ENCODE measurements at regions of chr22 and their contacts with region 1.

Region 1: GRCh38 chr22:41951898-41952474 is at the start of gene SMIM45:
- DNase-seq: no peak
- H3K4me3 ChIP-seq: no peak within 1 kb of the TSS
- H3K27ac ChIP-seq: no peak within 1 kb of the TSS
- H3K4me1 ChIP-seq: peaks cover 0 to 3% of the 10 kb centered on the region in 2 donors
- H3K27me3 ChIP-seq: no peaks in the 10 kb centered on the region
- CTCF ChIP-seq: no peak
- POLR2A ChIP-seq: no peak

Region 2: DNA sequence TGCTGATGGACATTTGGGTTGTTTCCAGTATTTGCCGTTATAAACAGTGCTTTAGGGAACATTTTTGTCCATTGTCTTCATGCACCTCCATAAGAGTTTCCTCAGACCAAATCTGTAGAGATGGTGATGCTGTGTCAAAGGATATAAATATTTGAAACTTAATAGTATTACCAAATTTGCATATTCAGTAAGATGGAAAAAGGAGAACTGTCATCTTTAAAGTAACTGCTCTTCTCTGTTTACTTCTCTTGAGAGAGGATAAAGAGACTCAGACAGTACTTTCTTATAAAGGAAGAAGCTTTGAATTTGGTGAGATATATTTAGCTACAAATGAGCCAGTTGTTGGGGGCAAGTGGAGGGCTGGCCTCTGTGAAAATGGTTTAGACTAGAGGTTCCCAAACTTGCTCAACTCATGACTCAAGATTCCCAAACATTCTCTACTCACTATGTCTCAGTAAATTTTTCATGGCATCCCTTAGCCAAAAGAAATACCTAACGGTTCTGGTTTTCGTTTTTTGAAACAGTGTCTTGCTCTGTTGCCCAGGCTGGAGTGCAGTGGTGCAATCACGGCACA is 63.3 kb before region 1 on chr22:
- intact Hi-C with region 1: no loop called
- DNase-seq: no peak
- H3K4me3 ChIP-seq: no peak overlapping the region
- H3K27ac ChIP-seq: no peak overlapping the region
- H3K4me1 ChIP-seq: no peaks in the 10 kb centered on the region
- H3K27me3 ChIP-seq: no peaks in the 10 kb centered on the region
- CTCF ChIP-seq: no peak
- POLR2A ChIP-seq: no peak

Region 3: DNA sequence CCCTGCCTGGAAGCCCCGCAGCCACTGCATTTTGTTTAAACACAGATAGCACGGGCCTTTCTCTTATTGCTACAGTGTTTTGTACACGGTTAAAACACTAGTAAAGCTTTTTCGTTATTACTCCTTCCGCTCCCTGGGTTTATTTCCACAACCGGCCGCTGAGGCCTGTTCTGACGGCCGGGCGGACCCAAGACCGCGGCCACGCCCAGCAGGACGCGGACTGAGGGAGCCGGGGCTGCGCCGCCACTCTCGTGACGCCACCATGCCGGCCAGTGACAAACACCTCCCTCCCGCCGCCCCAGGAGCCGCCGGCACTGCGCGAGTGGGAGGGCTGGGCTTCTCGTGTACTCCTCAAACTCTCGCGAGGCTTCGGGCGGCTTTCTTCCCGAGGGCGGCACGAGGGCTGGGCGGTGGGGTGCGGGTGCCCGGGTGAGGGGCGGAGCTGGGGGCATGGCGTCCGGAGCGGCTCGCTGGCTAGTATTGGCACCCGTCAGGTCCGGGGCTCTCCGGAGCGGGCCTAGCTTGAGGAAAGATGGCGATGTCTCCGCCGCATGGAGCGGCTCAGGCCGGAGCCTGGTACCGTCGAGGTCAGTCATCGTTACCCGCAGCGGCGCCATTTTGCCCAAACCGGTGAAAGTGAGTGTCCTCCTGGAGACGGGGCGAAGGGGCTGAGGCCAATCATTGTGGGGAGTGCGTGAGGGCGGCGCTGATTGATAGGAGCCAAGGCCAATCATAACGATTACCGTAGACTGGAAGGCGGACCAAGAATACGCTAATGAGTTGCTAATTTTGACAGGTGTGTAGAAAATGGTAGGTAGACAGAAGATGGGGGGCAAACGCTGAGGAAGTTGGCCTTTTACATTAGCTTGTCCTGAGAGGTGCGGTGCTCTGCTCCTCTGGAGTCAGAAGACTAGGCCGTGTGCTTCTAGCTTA is 127.6 kb after region 1 on chr22 and contains the start of gene SMDT1:
- intact Hi-C with region 1: loop called (anchors 10 kb)
- DNase-seq: peak; percentile 100
- H3K4me3 ChIP-seq: peak within 1 kb of the TSS in 2 of 3 donors; percentile 32 to 60
- H3K27ac ChIP-seq: peak within 1 kb of the TSS; percentile 96 to 99 (median 97)
- H3K4me1 ChIP-seq: peaks cover 17 to 40% of the 10 kb centered on the region in 2 donors
- H3K27me3 ChIP-seq: no peaks in the 10 kb centered on the region
- CTCF ChIP-seq: no peak
- POLR2A ChIP-seq: peak in 1 of 2 donors; percentile 93
- total RNA-seq, gene SMDT1: 18.7 to 30.2 (median 22.0) TPM